CD4-positive, alpha-beta T cell (primary cell): ENCODE measurements at regions of chr18 and their contacts with region 1.

Region 1: DNA sequence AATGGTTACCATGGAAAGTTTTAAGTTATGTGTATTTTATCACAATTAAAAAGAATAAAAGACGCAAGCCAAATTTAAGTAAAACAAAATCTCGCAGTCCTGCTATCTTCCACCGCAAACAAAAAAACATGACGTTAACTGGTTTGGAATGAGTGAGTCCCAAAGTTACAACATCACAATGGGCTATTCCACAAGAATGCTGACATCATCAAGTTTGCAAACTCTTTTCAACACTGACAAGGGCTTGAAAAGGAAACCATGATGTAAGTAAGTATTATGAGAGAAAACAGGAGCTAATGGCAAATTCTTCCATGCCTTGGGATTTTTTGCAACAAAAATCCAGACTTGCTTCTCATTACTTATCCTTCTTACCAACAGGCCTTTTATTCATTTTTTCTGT is 31.1 kb downstream of the SIGLEC15 start:
- DNase-seq: no peak
- ATAC-seq: no peak
- H3K4me3 ChIP-seq: no peak overlapping the region
- H3K4me3 Mint-ChIP-seq: no peak overlapping the region
- H3K27ac ChIP-seq: no peak overlapping the region
- H3K27ac Mint-ChIP-seq: no peak overlapping the region
- H3K4me1 ChIP-seq: no peaks in the 10 kb centered on the region
- H3K4me1 Mint-ChIP-seq: no peaks in the 10 kb centered on the region
- H3K27me3 ChIP-seq: no peaks in the 10 kb centered on the region
- H3K27me3 Mint-ChIP-seq: no peaks in the 10 kb centered on the region
- CTCF ChIP-seq: no peak

Region 2: DNA sequence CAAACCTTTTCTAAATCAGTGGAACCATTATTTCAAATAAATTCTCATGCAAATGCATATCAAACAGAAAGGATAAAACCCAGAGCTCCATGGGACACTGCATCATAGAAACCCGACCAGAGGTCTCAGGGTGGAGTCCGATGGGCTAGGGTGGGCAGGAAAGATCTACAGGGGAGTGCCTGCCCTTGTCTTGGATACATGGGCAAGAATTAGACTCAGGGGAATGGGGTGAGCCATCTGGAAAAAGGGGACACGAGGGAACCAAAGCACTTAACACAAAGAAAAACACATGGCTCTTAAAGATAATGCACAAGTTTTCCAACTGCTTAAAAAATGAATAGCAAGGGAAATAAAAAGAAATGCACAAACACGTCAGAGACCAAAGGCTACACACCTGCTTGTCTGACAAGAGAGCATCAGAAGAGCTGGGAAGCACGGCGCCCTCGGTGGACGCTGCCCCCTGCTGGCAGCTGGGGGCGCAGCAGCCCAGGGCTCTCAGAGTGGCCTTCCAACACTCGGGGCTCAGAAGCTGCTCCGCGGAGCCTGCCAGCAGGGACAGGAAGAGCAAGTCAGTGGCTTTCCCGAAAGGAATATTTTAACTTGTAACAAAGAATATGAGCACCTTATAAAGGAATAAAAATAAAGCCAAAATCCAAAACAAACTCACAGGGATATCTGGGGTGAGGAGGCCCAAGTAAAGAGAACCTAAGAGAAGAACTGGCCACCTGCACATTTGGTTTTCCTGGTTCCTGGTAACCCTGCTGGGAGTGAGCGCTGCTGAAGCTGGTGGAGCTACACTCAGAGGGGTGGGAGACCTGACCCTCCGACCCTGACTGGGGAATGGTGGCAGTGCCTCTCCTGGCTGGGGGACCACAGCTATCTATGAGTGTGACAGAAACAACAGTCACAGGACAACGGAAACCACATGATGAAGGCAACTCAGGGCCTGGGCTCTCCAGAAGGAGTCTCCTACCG is 23.4 kb after region 1 on chr18:
- CTCF ChIA-PET with region 1: interaction called, 12 read pairs
- POLR2A ChIA-PET with region 1: no interaction called
- intact Hi-C with region 1: no loop called
- DNase-seq: peak; percentile 39 to 84 (median 69)
- ATAC-seq: peak; percentile 96
- H3K4me3 ChIP-seq: no peak overlapping the region
- H3K4me3 Mint-ChIP-seq: no peak overlapping the region
- H3K27ac ChIP-seq: no peak overlapping the region
- H3K27ac Mint-ChIP-seq: peak overlapping the region; percentile 2
- H3K4me1 ChIP-seq: peaks cover 10% of the 10 kb centered on the region
- H3K4me1 Mint-ChIP-seq: peaks cover 19% of the 10 kb centered on the region
- H3K27me3 ChIP-seq: no peaks in the 10 kb centered on the region
- H3K27me3 Mint-ChIP-seq: no peaks in the 10 kb centered on the region
- CTCF ChIP-seq: peak; percentile 99